ENCODE measurements at regions of chr12 and their contacts with region 1.

Region 1: DNA sequence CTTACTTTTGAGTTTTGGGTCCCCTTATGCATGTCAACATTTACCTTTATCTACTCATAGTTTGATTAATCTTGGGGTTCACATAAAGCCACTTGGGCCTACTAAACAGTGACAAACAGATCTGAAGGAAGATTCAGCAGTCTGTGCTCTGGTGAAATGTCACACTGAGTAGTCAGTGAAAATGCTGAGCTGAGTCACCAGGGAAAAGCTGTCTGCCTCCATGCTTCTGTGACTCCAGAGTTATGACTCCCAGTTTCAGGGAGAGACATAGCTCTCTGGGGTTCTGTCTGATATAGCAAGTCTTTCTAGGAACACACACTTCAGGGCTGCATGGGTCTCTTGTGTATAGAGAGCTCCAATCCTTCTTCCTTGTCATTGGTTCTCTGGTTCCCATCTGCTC is 406.3 kb upstream of the FAR2 start:
- DNase-seq: no peak
- ATAC-seq: no peak
- H3K4me3 ChIP-seq: no peak overlapping the region
- H3K27ac ChIP-seq: no peak overlapping the region
- H3K4me1 ChIP-seq: no peaks in the 10 kb centered on the region
- H3K27me3 ChIP-seq: no peaks in the 10 kb centered on the region
- CTCF ChIP-seq: no peak
- POLR2A ChIP-seq: no peak

Region 2: GRCh38 chr12:28830491-28830890 is 87.7 kb after region 1 on chr12:
- in situ Hi-C with region 1: loop called in 1 of 4 experiments (anchors 25 kb)
- intact Hi-C with region 1: no loop called
- DNase-seq: no peak
- ATAC-seq: no peak
- H3K4me3 ChIP-seq: no peak overlapping the region
- H3K27ac ChIP-seq: no peak overlapping the region
- H3K4me1 ChIP-seq: no peaks in the 10 kb centered on the region
- H3K27me3 ChIP-seq: no peaks in the 10 kb centered on the region
- CTCF ChIP-seq: no peak
- POLR2A ChIP-seq: no peak

Measured in gastrocnemius medialis (tissue), 4 donors.